Gastrocnemius medialis (tissue), 4 donors: ENCODE measurements at regions of chr19 and their contacts with region 1.

Region 1: GRCh38 chr19:16185123-16185767 is at the start of gene FAM32A:
- DNase-seq: peak; percentile 98 to 99
- ATAC-seq: peak; percentile 99
- H3K4me3 ChIP-seq: peak within 1 kb of the TSS; percentile 83 to 95 (median 92)
- H3K27ac ChIP-seq: peak within 1 kb of the TSS; percentile 82 to 88 (median 86)
- H3K4me1 ChIP-seq: peaks cover 10 to 11% of the 10 kb centered on the region in 2 donors
- H3K27me3 ChIP-seq: peaks cover 0 to 5% (median 0%) of the 10 kb centered on the region in 3 donors
- CTCF ChIP-seq: peak in 3 of 5 experiments; percentile 23 to 52 (median 49)
- POLR2A ChIP-seq: peak; percentile 74 to 84
- total RNA-seq, gene FAM32A: 57.2 to 72.3 (median 63.6) TPM

Region 2: DNA sequence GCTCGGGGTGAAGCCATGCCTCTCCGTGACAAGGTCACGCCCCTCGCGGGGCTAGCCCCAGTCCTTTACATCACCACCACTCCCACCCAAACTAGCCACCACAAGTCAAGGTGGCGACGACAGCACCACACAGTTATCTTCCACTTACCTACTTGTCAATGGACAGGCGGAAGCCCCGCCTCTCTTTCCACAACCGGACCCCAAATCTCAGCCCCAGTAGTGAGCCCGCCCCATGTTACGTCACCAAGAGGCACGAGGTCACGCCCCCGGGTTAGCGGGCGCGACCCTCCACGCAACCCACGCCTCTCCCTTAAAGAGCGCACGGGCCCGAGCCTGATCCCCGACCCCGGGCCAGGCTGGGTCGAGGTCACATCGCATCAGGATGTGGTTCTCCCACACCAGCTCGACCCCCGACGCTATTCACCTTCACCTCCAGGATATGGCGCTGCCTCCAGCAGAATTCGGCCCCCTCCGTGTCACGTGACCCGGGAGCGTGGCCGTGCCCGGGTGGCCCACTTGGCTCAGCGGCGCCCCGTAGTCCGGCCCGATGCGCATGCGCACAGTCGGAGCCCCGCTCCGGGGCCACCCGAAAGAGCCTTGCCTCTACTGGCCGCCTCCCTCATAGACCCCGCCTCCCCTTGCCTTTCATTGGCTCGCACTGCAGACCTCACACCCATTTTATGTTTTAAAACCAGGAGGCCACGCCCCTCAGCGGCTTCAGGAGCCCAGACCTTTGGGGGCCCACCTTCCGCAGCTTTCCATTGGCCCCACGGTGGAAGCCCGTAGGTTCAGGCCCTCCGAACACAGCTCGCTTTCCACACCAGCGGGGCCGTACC is 1059.8 kb before region 1 on chr19:
- in situ Hi-C with region 1: no loop called
- intact Hi-C with region 1: loop called (anchors 10 kb)
- DNase-seq: peak; percentile 95 to 98
- ATAC-seq: peak; percentile 94 to 95
- H3K4me3 ChIP-seq: peak overlapping the region; percentile 78 to 85 (median 84)
- H3K27ac ChIP-seq: peak overlapping the region; percentile 89 to 95 (median 93)
- H3K4me1 ChIP-seq: peaks cover 13 to 15% of the 10 kb centered on the region in 2 donors
- H3K27me3 ChIP-seq: no peaks in the 10 kb centered on the region
- CTCF ChIP-seq: peak in 2 of 5 experiments; percentile 35 to 48
- POLR2A ChIP-seq: peak; percentile 40 to 42

Region 3: GRCh38 chr19:15584541-15585115 is 600.6 kb before region 1 on chr19:
- in situ Hi-C with region 1: loop called in 2 of 4 experiments (anchors 25 kb)
- intact Hi-C with region 1: no loop called
- DNase-seq: peak; percentile 17 to 29
- ATAC-seq: no peak
- H3K4me3 ChIP-seq: no peak overlapping the region
- H3K27ac ChIP-seq: no peak overlapping the region
- H3K4me1 ChIP-seq: no peaks in the 10 kb centered on the region
- H3K27me3 ChIP-seq: peaks cover 21 to 25% (median 23%) of the 10 kb centered on the region in 3 donors
- CTCF ChIP-seq: peak; percentile 47 to 76 (median 65)
- POLR2A ChIP-seq: no peak

Region 4: GRCh38 chr19:15629003-15629880 is 556.0 kb before region 1 on chr19:
- in situ Hi-C with region 1: no loop called
- intact Hi-C with region 1: loop called (anchors 2 kb)
- DNase-seq: peak; percentile 11 to 17
- ATAC-seq: no peak
- H3K4me3 ChIP-seq: no peak overlapping the region
- H3K27ac ChIP-seq: no peak overlapping the region
- H3K4me1 ChIP-seq: no peaks in the 10 kb centered on the region
- H3K27me3 ChIP-seq: peaks cover 0 to 13% (median 5%) of the 10 kb centered on the region in 3 donors
- CTCF ChIP-seq: peak; percentile 55 to 79 (median 77)
- POLR2A ChIP-seq: no peak

Region 5: DNA sequence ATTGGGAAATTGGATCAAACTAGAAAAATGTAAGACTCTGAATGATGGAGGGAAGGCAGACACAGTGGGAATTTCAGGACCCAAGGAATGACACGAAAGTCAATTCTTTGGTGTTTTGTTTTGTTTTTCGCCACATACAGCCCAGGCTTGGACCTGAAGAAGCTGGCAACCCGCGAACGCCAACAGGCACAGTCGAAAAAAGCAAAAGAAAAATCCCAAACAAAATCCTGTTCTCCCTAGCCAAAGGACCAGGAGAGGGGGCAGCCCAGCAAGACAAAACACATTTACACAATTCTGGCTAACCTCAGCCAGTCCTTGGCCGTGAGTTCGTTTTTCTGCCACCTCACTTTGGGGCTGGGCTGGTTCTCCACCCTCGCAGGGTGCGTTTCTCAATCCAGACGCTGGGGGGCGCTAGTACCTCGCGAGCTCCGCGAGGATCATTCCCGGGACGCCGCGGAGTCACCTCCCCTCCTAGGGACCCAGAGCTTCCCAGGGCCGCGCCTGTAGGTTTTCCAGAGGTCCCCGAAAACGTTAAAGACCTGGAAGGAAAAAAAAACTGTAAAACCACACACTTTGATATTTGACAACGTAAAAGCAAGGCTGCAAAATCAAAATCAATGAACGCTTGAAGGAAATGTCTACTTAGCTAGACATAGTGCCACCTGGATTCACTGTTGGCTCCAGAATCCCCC is 143.8 kb before region 1 on chr19:
- in situ Hi-C with region 1: loop called in 2 of 4 experiments (anchors 5 to 25 kb)
- intact Hi-C with region 1: loop called (anchors 1 kb)
- DNase-seq: peak; percentile 26 to 33
- ATAC-seq: peak; percentile 70 to 85
- H3K4me3 ChIP-seq: peak overlapping the region in 3 of 4 donors; percentile 21 to 35 (median 32)
- H3K27ac ChIP-seq: no peak overlapping the region
- H3K4me1 ChIP-seq: peaks cover 0 to 7% of the 10 kb centered on the region in 2 donors
- H3K27me3 ChIP-seq: no peaks in the 10 kb centered on the region
- CTCF ChIP-seq: peak; percentile 43 to 91 (median 86)
- POLR2A ChIP-seq: no peak

Region 6: GRCh38 chr19:16062789-16063188 is 122.5 kb before region 1 on chr19:
- in situ Hi-C with region 1: no loop called
- intact Hi-C with region 1: no loop called
- DNase-seq: no peak
- ATAC-seq: no peak
- H3K4me3 ChIP-seq: no peak overlapping the region
- H3K27ac ChIP-seq: no peak overlapping the region
- H3K4me1 ChIP-seq: no peaks in the 10 kb centered on the region
- H3K27me3 ChIP-seq: no peaks in the 10 kb centered on the region
- CTCF ChIP-seq: peak; percentile 33 to 67 (median 57)
- POLR2A ChIP-seq: no peak

Region 7: GRCh38 chr19:16111160-16111908 is 73.9 kb before region 1 on chr19 and contains the start of gene RAB8A:
- in situ Hi-C with region 1: loop called in 1 of 4 experiments (anchors 10 kb)
- intact Hi-C with region 1: loop called (anchors 2 kb)
- DNase-seq: peak; percentile 98 to 99
- ATAC-seq: peak; percentile 96 to 97
- H3K4me3 ChIP-seq: peak within 1 kb of the TSS; percentile 87 to 96 (median 90)
- H3K27ac ChIP-seq: peak within 1 kb of the TSS; percentile 90 to 95 (median 94)
- H3K4me1 ChIP-seq: peaks cover 11 to 20% of the 10 kb centered on the region in 2 donors
- H3K27me3 ChIP-seq: no peaks in the 10 kb centered on the region
- CTCF ChIP-seq: peak; percentile 92 to 99 (median 99)
- POLR2A ChIP-seq: no peak
- total RNA-seq, gene RAB8A: 8.3 to 12.1 (median 9.2) TPM

Region 8: GRCh38 chr19:16153582-16154336 is 31.5 kb before region 1 on chr19:
- in situ Hi-C with region 1: no loop called
- intact Hi-C with region 1: no loop called
- DNase-seq: no peak
- ATAC-seq: no peak
- H3K4me3 ChIP-seq: no peak overlapping the region
- H3K27ac ChIP-seq: no peak overlapping the region
- H3K4me1 ChIP-seq: no peaks in the 10 kb centered on the region
- H3K27me3 ChIP-seq: no peaks in the 10 kb centered on the region
- CTCF ChIP-seq: no peak
- POLR2A ChIP-seq: no peak

Region 9: DNA sequence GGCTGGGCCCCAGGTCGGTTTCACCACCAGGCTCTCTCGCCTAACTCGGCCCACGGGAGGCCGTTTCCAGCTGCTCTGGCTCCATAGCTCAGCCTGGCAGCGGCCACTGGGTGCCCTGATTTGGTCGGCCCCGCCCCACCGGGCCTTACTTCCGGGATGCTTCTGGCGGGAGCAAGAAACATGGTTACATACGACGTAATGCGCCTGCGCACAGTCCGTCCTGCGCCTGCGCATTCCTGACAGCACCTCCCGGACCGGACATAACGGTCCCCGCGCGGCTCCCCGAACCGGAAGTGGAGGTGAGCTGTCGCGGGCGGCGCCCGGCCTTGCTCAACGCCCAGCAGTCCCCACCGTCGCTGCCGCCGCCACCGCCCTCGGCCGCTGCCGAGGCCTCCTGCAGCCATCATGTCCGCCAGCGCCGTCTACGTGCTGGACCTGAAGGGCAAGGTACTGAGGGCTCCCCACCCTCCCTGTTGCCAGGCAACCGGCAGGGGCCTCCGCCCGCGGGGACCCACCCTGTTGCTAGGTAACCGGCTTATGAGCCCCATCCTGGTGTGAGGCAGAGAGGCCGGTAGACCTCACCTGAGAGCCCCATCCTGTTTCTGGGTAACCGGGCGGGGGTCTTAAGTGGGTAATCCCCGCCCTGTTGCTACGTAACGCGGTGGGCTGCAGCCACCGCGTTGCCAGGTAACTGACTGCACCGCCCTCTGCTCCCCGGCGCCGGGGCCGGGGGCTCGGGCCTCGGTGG is 12.6 kb after region 1 on chr19 and contains the start of gene AP1M1:
- in situ Hi-C with region 1: no loop called
- intact Hi-C with region 1: loop called (anchors 1 kb)
- DNase-seq: peak; percentile 96 to 99
- ATAC-seq: peak; percentile 98 to 99
- H3K4me3 ChIP-seq: peak within 1 kb of the TSS; percentile 87 to 100 (median 92)
- H3K27ac ChIP-seq: peak within 1 kb of the TSS; percentile 77 to 93 (median 90)
- H3K4me1 ChIP-seq: peaks cover 20 to 27% of the 10 kb centered on the region in 2 donors
- H3K27me3 ChIP-seq: no peaks in the 10 kb centered on the region
- CTCF ChIP-seq: no peak
- POLR2A ChIP-seq: peak; percentile 1 to 56
- total RNA-seq, gene AP1M1: 68.2 to 119 (median 73.5) TPM

Region 10: GRCh38 chr19:16208064-16208759 is 23.0 kb after region 1 on chr19:
- in situ Hi-C with region 1: no loop called
- intact Hi-C with region 1: no loop called
- DNase-seq: no peak
- ATAC-seq: no peak
- H3K4me3 ChIP-seq: no peak overlapping the region
- H3K27ac ChIP-seq: no peak overlapping the region
- H3K4me1 ChIP-seq: no peaks in the 10 kb centered on the region
- H3K27me3 ChIP-seq: no peaks in the 10 kb centered on the region
- CTCF ChIP-seq: no peak
- POLR2A ChIP-seq: no peak

Region 11: GRCh38 chr19:16226878-16227836 is 41.9 kb after region 1 on chr19:
- in situ Hi-C with region 1: no loop called
- intact Hi-C with region 1: no loop called
- DNase-seq: no peak
- ATAC-seq: no peak
- H3K4me3 ChIP-seq: no peak overlapping the region
- H3K27ac ChIP-seq: no peak overlapping the region
- H3K4me1 ChIP-seq: no peaks in the 10 kb centered on the region
- H3K27me3 ChIP-seq: no peaks in the 10 kb centered on the region
- CTCF ChIP-seq: no peak
- POLR2A ChIP-seq: no peak